ENCODE measurements at regions of chr3 and their contacts with region 1.

Region 1: DNA sequence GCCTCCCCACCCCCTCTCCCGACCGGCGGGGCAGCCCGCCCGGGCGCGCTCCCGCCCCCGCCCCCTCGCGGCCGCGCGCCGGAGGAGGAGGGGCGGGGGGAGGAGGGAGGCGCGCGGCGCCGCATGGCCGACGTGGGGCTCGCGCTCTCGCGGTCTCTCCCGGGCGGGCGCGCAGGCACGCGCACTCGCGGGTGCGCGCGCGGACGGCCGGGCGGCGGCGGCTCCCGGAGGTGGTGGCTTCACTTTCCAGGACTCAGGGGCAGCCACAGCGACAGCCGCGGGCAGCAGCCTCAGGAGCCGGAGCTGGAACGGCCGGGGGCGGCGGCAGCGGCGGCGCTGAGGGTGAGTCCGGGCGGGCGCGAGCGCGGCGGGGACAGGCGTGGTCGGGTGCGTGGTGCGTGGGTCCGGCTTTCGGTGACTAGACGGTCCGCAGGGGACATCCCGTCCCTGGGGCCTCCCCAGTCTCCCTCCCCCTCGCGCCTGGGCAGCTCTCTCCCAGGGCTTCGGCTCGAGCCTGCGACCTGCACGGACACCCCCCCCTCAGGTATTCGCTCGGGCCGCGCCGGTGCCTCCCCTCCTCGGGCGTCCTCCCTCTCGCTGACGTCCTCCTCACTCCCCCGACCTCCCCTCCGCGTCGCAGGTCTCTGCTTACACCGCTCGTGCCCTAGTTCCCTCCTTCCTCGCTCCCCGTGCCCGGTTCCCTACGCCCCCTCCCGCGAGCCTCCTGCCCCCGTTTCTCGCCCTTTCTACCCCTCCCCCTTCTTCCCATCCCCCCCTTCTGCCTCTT is at the start of gene UBE2E2:
- DNase-seq: no peak
- ATAC-seq: peak; percentile 90
- H3K4me3 ChIP-seq: peak within 1 kb of the TSS; percentile 86 to 87
- H3K27ac ChIP-seq: peak within 1 kb of the TSS; percentile 71
- H3K4me1 ChIP-seq: peaks cover 10% of the 10 kb centered on the region
- H3K27me3 ChIP-seq: no peaks in the 10 kb centered on the region
- CTCF ChIP-seq: no peak
- total RNA-seq, gene UBE2E2: 38.2 TPM

Region 2: DNA sequence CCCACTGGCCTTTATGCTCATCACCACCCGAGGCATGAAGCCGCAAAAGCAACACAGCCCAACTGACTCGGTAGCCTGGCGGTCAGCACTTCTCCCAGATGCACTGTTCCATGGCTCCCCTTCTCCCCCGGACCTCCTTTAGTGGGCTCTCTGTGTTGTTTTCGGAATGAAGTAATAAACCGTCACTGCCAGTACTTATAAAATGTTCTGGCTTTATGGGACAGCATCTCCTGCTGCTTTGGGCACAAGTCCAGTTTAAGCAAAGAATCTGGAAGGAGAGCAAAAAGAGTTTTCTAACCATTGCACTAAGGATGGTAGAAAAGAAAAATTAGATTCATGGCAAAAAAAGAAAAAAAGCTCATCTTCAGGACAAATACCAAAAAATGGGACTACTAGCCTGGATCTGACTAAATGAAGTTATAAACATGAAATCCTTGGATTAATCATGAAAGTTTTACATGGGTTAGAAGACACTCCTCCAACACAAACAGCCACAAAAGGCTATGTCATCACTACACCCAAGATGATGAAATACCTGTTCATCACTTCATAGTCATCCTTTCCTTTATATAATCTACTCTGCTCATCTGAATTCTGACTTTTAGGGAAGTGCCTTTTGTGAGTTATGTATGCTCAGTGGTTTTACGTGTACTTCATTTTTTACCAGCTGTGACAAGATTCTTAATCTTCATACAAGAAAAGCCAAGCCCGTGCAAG is 89.5 kb before region 1 on chr3:
- CTCF ChIA-PET with region 1: no interaction called
- POLR2A ChIA-PET with region 1: no interaction called
- in situ Hi-C with region 1: no loop called
- intact Hi-C with region 1: no loop called
- DNase-seq: no peak
- ATAC-seq: no peak
- H3K4me3 ChIP-seq: no peak overlapping the region
- H3K27ac ChIP-seq: no peak overlapping the region
- H3K4me1 ChIP-seq: peaks cover 3% of the 10 kb centered on the region; the same call in 1 of the 2 replicates
- H3K27me3 ChIP-seq: 0 out of 2 replicates have a peak, but pooled peaks cover under 1% of the 10 kb centered on the region
- CTCF ChIP-seq: no peak

Region 3: GRCh38 chr3:23256741-23257435 is 53.8 kb after region 1 on chr3:
- CTCF ChIA-PET with region 1: interaction called, 20 read pairs
- POLR2A ChIA-PET with region 1: no interaction called
- in situ Hi-C with region 1: no loop called
- intact Hi-C with region 1: no loop called
- DNase-seq: no peak
- ATAC-seq: no peak
- H3K4me3 ChIP-seq: no peak overlapping the region
- H3K27ac ChIP-seq: no peak overlapping the region
- H3K4me1 ChIP-seq: peaks cover 3% of the 10 kb centered on the region; the same call in 1 of the 2 replicates
- H3K27me3 ChIP-seq: no peaks in the 10 kb centered on the region
- CTCF ChIP-seq: no peak

Region 4: DNA sequence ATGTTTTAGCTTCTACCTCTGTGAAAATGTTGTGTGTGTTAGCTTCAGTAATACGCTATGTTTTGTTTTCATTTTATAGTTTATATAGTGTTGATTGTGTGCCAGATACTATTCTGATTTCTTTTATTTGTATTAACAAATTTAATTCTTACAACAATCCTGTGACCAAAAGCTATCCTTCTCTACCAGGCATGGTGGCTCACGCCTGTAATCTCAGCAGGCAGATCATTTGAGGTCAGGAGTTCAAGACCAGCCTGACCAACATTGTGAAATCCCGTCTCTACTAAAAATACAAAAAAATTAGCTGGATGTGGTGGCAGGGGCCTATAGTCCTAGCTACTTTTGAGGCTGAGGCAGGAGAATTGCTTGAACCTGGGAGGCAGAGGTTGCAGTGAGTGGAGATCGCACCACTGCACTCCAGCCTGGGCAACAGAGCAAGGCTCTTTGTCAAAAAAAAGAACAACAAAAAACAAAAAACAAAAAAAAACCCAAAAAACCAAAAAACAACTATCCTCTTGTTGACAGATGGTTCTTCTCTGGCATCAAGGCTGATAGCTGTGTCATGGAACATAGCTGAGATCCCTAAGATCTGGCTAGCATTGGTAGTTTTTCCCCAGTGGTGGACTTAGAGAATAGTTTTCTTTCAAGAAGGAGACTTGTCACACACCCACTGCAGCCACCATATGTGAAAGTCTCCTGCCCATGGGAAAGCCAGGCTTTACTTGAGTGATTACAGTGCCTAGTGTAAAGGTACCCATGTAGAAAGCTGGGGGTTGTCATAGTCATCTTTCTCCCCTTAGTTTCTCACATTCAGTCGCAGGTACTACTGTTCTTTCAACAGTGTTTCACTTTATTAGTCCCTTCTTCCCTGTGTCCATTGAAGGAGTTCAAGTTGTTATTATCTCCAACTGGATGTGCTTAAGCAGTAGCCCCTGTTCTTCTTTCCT is 116.5 kb after region 1 on chr3:
- CTCF ChIA-PET with region 1: no interaction called
- POLR2A ChIA-PET with region 1: no interaction called
- in situ Hi-C with region 1: no loop called
- intact Hi-C with region 1: no loop called
- DNase-seq: no peak
- ATAC-seq: no peak
- H3K4me3 ChIP-seq: no peak overlapping the region
- H3K27ac ChIP-seq: no peak overlapping the region
- H3K4me1 ChIP-seq: peaks cover under 1% of the 10 kb centered on the region; the same call in 1 of the 2 replicates
- H3K27me3 ChIP-seq: no peaks in the 10 kb centered on the region
- CTCF ChIP-seq: no peak